SK-N-SH (cell line): ENCODE measurements at regions of chr1 and their contacts with region 1.

Region 1: GRCh38 chr1:94949681-94950661 is 23.1 kb upstream of the CNN3 start:
- DNase-seq: peak; percentile 68
- H3K4me3 ChIP-seq: no peak overlapping the region
- H3K27ac ChIP-seq: peak overlapping the region; percentile 46 to 99; a peak in 3 of 4 replicates
- H3K4me1 ChIP-seq: peaks cover 0 to 38% of the 10 kb centered on the region in 2 experiments; a peak in 2 of 4 replicates
- H3K27me3 ChIP-seq: no peaks in the 10 kb centered on the region
- CTCF ChIP-seq: no peak
- EP300 ChIP-seq: peak; percentile 64 to 98; a peak in 2 of 4 replicates
- RAD21 ChIP-seq: peak; percentile 21; the same call in 1 of the 2 replicates

Region 2: DNA sequence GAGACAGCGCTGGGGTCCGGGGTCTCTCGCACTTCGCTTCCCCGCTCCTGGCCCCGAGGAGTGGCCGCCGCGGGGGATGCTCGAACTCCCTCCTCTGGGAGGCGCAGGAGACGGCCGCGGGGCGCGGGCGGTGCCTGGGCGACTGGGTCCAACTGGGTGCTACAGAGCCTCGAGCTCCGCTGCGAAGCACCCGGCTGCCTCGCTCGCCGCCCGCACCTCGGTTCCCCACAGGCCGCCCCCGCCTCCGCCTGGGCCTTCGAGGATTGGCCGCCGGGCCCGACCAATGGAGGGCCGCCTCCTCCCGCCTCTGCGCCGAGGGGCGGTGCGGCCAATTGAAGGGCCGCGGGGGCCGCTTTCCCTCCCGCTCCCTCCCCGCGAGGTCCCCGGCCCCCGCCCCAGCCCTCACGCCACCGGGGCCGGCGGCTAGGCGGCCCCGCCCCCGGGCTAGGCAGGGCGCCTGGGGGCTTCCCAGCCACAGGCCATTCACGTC is 23.0 kb before region 1 on chr1 and contains the start of gene CNN3:
- CTCF ChIA-PET with region 1: interaction called, 5 read pairs
- POLR2A ChIA-PET with region 1: interaction called, 20 read pairs
- DNase-seq: peak; percentile 98
- H3K4me3 ChIP-seq: peak within 1 kb of the TSS; percentile 96 to 98
- H3K27ac ChIP-seq: peak within 1 kb of the TSS; percentile 97 to 98
- H3K4me1 ChIP-seq: peaks cover 29 to 42% of the 10 kb centered on the region in 2 experiments
- H3K27me3 ChIP-seq: no peaks in the 10 kb centered on the region
- CTCF ChIP-seq: no peak
- EP300 ChIP-seq: no peak
- RAD21 ChIP-seq: no peak; the same call in 1 of the 2 replicates
- polyA plus RNA-seq, gene CNN3: 204 and 242 TPM in 2 replicates

Region 3: DNA sequence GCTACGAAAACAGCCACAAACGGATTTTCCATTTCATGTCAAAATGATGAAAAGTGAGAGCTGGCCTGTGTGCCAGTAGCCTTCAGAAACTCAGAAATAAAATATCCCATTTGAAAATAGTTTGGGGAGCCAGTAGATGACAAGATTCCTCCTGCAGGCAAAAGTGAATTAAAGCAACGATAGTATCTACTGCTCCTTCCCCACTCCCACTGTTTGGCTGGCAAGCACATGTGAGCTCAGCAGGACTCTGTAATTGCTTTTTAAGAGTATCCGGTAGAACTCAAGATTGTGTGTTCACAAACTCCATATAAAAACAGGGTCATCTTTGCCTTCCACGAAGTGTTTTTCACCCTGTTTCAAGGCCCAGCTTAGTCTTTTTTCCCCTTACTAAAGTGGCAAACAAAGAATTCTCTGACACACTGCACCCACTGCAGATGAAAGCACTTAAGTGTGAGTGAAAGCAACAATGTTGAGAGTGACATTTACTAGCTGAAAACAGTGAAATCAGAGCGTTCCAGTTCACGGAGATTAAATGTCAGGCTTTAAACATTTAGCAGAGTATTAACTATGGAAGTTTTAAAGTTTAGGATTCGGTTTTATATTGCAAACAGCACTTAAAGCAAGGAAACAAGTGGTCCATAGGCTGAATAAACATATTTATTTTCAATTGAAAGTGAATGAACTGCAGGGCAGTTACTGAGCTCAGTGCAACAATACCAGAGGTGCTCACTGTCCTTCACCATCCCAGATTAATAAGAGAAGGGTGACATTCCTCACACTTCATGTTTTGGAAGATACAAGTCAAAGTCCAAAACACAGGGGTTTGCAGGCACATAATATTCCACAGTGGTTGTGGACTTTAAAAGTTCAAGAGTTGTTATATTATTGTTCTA is 52.8 kb after region 1 on chr1:
- CTCF ChIA-PET with region 1: interaction called, 10 read pairs
- POLR2A ChIA-PET with region 1: no interaction called
- DNase-seq: peak; percentile 54
- H3K4me3 ChIP-seq: 0 out of 4 replicates have a peak overlapping the region, but pooled peaks of 1 of the 2 experiments have one; percentile 38
- H3K27ac ChIP-seq: peak overlapping the region; percentile 68 to 98
- H3K4me1 ChIP-seq: peaks cover 19 to 33% of the 10 kb centered on the region in 2 experiments
- H3K27me3 ChIP-seq: no peaks in the 10 kb centered on the region
- CTCF ChIP-seq: peak; percentile 8; the same call in 1 of the 2 replicates
- EP300 ChIP-seq: peak; percentile 16 to 86; a peak in 3 of 4 replicates
- RAD21 ChIP-seq: peak; percentile 53